ENCODE measurements at regions of chr15 and their contacts with region 1.

Region 1: GRCh38 chr15:31396881-31397560 is 70.4 kb downstream of the KLF13 start:
- DNase-seq: peak; percentile 94 to 95
- ATAC-seq: peak; percentile 82 to 94 (median 92)
- H3K4me3 ChIP-seq: peak overlapping the region in 4 of 10 donors; percentile 4 to 32 (median 14)
- H3K27ac ChIP-seq: peak overlapping the region; percentile 25 to 88 (median 83)
- H3K4me1 ChIP-seq: peaks cover 13 to 59% (median 32%) of the 10 kb centered on the region in 9 donors
- H3K27me3 ChIP-seq: peaks cover 0 to 11% (median 0%) of the 10 kb centered on the region in 7 donors
- CTCF ChIP-seq: peak in 5 of 9 donors; percentile 36 to 60 (median 51)

Region 2: DNA sequence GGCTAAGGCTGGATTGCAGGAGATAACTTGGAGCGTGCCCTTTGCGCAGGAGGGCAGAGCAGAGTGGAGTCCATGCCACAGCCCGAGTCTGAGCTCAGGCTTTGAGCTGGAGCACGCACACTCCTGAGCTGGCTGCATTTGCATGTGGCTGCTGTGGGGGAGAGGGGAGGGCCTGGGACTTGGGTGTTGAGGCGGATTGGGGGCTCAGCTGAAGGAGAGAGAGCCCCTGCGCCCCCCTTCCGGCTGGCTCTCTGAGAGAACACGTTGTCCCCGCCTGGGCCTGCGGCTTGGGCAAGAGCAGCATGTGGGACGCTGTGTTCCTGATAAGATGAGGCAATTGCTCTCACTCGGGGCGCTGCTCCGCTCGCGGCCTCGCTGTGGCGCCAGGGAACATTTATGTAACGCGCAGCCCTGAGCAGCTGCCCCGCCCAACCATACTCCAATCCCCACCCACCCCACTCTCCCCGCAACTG is 31.3 kb before region 1 on chr15:
- intact Hi-C with region 1: loop called in 1 of 10 experiments (anchors 2 kb)
- DNase-seq: peak; percentile 91 to 93
- ATAC-seq: peak; percentile 89 to 93 (median 92)
- H3K4me3 ChIP-seq: peak overlapping the region in 9 of 10 donors; percentile 21 to 39 (median 32)
- H3K27ac ChIP-seq: peak overlapping the region; percentile 78 to 97 (median 93)
- H3K4me1 ChIP-seq: peaks cover 57 to 100% (median 98%) of the 10 kb centered on the region in 9 donors
- H3K27me3 ChIP-seq: no peaks in the 10 kb centered on the region
- CTCF ChIP-seq: peak in 8 of 9 donors; percentile 30 to 62 (median 50)

Measured in heart right ventricle (tissue), 16 donors.